OCI-LY7 (cell line): ENCODE measurements at regions of chr12 and their contacts with region 1.

Region 1: DNA sequence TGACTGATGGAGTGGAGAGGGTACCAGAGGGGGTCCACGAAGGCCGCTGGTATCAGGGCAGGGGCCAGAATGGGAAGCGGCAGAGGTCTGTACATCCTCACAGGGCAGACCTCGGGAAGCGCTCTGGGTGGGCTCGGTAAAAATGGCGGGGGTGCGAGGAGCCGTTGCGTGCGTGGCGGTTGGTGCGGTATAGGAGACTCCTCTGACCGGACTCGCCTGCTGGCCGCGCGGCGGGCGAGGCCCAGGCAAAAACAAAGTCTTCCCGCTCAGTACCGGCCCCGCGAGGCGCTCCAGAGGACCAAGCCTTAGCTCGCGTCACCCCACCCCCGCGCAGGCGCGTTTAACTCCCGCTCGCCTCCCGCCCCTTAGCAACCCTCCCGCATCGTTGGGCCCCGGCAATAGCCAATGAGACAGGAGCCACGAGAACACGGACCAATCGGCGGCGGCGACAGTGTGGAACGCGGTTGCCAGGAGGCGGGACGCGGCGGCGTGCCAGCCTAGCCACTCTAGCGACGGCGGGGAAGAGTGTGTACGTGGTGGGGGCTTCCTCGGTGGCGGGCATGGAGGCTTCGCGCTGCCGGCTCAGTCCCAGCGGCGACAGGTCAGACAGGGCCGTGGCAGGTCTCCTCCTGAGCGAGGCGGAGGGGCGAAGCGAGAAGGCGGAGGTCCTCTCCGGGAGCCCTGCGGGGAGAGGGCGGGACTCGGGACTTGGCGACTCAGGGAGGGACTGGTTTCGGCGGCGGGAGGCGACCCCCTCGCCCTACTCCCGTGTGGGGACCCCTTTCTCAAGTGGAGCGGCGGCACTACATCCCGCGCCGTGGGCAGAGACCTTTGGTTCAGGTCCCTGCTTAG is at the start of gene TULP3:
- DNase-seq: peak; percentile 94
- H3K4me3 ChIP-seq: peak within 1 kb of the TSS; percentile 88
- H3K27ac ChIP-seq: peak within 1 kb of the TSS; percentile 33
- H3K4me1 ChIP-seq: peaks cover 6% of the 10 kb centered on the region
- CTCF ChIP-seq: no peak
- total RNA-seq, gene TULP3: 6.9 and 10.7 TPM in 2 replicates

Region 2: GRCh38 chr12:2877047-2877952 is 13.3 kb before region 1 on chr12 and contains the starts of genes FOXM1 and RHNO1:
- CTCF ChIA-PET with region 1: no interaction called
- POLR2A ChIA-PET with region 1: interaction called, 9 read pairs
- intact Hi-C with region 1: loop called (anchors 1 kb)
- DNase-seq: peak; percentile 90
- H3K4me3 ChIP-seq: peak within 1 kb of the TSS; percentile 76
- H3K27ac ChIP-seq: peak within 1 kb of the TSS; percentile 76
- H3K4me1 ChIP-seq: peaks cover 29% of the 10 kb centered on the region
- CTCF ChIP-seq: no peak
- total RNA-seq, gene FOXM1: 91.7 and 109 TPM in 2 replicates
- total RNA-seq, gene RHNO1: 35.4 and 48.3 TPM in 2 replicates

Region 3: GRCh38 chr12:2944401-2945047 is 53.9 kb after region 1 on chr12:
- CTCF ChIA-PET with region 1: no interaction called
- POLR2A ChIA-PET with region 1: no interaction called
- intact Hi-C with region 1: loop called (anchors 5 kb)
- DNase-seq: peak; percentile 53
- H3K4me3 ChIP-seq: no peak overlapping the region
- H3K27ac ChIP-seq: no peak overlapping the region
- H3K4me1 ChIP-seq: no peaks in the 10 kb centered on the region
- CTCF ChIP-seq: peak; percentile 87